ENCODE measurements at regions of chr1 and their contacts with region 1.

Region 1: DNA sequence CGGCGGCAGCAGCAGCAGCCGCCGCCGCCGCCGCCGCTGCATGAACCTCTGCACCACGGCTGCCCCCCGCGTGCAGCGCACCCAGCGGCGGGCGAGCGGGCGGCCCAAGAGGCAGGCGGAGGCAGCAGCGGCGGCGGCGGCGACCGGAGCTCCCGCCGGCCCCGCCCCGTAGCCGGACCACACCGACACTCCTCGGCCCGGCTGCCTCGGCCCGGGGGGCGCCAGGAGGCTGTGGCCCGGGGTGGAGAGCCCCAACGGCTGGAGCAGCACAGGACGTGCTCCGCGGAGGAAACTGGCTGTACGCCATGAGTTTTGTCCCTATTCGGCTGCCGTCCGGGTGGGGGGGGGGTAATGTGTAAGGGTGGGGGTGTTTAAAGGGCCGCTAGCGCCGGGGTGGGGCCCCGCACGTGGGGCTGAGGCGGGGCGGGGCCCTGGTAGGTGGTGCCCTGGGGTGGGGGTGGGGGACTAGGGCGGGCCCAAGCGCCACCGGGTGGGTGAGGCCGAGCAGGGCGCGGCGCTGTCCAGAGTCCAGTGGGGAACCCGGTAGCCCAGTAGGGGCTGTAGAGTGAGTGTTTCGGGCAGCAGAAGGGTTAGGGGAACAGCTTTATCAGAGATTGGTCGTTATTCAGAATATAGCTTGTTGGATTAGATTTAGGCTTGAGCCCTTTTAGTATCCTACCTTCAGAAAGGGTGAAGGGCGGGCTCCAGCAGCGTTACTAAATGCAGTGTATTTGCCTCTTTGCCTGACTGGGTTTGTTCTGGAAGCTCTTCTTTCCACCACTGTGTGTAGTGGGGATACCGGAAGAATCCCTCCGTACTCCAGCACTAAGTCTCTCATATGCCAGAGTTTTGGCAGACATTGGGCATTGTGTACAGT is at the start of gene FAM78B:
- DNase-seq: peak; percentile 78 to 84
- ATAC-seq: peak; percentile 74 to 81
- H3K4me3 ChIP-seq: peak within 1 kb of the TSS; percentile 59 to 69 (median 64)
- H3K27ac ChIP-seq: peak within 1 kb of the TSS; percentile 82 to 89 (median 86)
- H3K4me1 ChIP-seq: peaks cover 11 to 21% of the 10 kb centered on the region in 2 donors
- H3K27me3 ChIP-seq: no peaks in the 10 kb centered on the region
- CTCF ChIP-seq: peak in 4 of 5 experiments; percentile 9 to 20 (median 10)
- POLR2A ChIP-seq: peak in 1 of 2 donors; percentile 5
- total RNA-seq, gene FAM78B: 1.6 to 9.9 (median 2.6) TPM

Region 2: GRCh38 chr1:165747632-165748447 is 419.1 kb before region 1 on chr1:
- in situ Hi-C with region 1: no loop called
- intact Hi-C with region 1: loop called (anchors 10 kb)
- DNase-seq: no peak
- ATAC-seq: no peak
- H3K4me3 ChIP-seq: no peak overlapping the region
- H3K27ac ChIP-seq: no peak overlapping the region
- H3K4me1 ChIP-seq: no peaks in the 10 kb centered on the region
- H3K27me3 ChIP-seq: no peaks in the 10 kb centered on the region
- CTCF ChIP-seq: no peak
- POLR2A ChIP-seq: no peak

Region 3: GRCh38 chr1:166272155-166272554 is 105.2 kb after region 1 on chr1:
- in situ Hi-C with region 1: no loop called
- intact Hi-C with region 1: loop called (anchors 10 kb)
- DNase-seq: no peak
- ATAC-seq: no peak
- H3K4me3 ChIP-seq: no peak overlapping the region
- H3K27ac ChIP-seq: peak overlapping the region in 1 of 4 donors; percentile 59
- H3K4me1 ChIP-seq: peaks cover 12 to 17% of the 10 kb centered on the region in 2 donors
- H3K27me3 ChIP-seq: no peaks in the 10 kb centered on the region
- CTCF ChIP-seq: no peak
- POLR2A ChIP-seq: no peak

Region 4: DNA sequence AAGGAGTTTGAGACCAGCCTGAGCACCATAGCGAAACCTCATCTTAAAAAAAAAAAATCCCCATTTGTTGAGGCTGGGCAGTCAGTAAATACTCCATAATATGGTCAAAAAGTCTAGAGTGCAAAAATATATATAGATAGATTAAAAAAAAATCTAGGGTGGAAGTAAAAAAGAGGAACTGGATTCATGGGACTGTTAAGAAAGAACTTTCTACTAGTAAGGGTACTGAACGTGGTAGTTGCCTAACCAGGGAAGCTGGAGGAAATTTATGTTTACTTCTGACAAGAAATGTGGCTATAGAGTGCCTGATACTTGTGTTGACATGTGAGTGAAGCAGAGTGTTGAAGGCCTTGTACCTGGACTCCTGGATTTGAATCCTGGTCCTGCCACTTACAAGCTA is 265.7 kb after region 1 on chr1:
- in situ Hi-C with region 1: no loop called
- intact Hi-C with region 1: loop called (anchors 5 kb)
- DNase-seq: no peak
- ATAC-seq: no peak
- H3K4me3 ChIP-seq: no peak overlapping the region
- H3K27ac ChIP-seq: no peak overlapping the region
- H3K4me1 ChIP-seq: no peaks in the 10 kb centered on the region
- H3K27me3 ChIP-seq: no peaks in the 10 kb centered on the region
- CTCF ChIP-seq: no peak
- POLR2A ChIP-seq: no peak